ENCODE measurements at regions of chr16 and their contacts with region 1.

Region 1: GRCh38 chr16:70508752-70509151 is 14.6 kb downstream of the COG4 start:
- DNase-seq: no peak
- H3K4me3 Mint-ChIP-seq: no peak overlapping the region
- H3K27ac Mint-ChIP-seq: peak overlapping the region; percentile 66
- H3K4me1 Mint-ChIP-seq: peaks cover 9% of the 10 kb centered on the region
- H3K27me3 Mint-ChIP-seq: no peaks in the 10 kb centered on the region

Region 2: GRCh38 chr16:70388006-70388680 is 120.6 kb before region 1 on chr16:
- CTCF ChIA-PET with region 1: no interaction called
- POLR2A ChIA-PET with region 1: no interaction called
- DNase-seq: no peak
- H3K4me3 Mint-ChIP-seq: no peak overlapping the region
- H3K27ac Mint-ChIP-seq: no peak overlapping the region
- H3K4me1 Mint-ChIP-seq: peaks cover 6% of the 10 kb centered on the region
- H3K27me3 Mint-ChIP-seq: no peaks in the 10 kb centered on the region

Region 3: DNA sequence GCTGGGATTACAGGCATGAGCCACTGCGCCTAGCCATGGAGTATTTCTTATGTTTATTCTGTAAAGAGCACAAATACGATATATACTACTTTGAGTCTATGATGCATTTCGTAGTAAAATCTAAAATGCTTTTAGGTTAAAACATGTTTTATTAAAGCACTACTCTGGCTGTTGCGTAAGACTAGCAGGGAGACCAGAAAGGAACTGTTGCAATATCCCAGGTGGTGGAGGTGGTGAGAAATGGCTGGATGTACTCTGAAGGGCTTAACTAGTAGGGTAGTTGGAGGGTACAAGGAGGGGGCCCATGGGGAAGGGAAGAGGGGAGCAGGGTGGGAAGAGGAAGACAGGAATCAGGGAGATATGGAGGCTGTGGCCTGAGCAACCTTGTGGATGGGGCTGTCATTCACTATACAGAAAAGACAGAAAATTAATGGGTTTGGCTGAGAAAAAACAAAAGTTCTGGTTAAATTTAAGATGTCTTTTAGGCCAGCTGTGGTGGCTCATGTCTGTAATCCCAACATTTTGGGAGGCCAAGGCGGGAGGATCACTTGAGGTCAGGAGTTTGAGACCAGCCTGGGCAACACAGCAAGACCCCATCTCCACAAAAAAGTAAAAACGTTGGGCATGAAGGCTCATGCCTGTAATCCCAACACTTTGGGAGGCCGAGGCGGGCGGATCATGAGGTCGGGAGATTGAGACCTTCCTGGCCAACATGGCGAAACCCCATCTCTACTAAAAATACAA is 105.7 kb before region 1 on chr16:
- CTCF ChIA-PET with region 1: no interaction called
- POLR2A ChIA-PET with region 1: no interaction called
- DNase-seq: no peak
- H3K4me3 Mint-ChIP-seq: no peak overlapping the region
- H3K27ac Mint-ChIP-seq: no peak overlapping the region
- H3K4me1 Mint-ChIP-seq: peaks cover 36% of the 10 kb centered on the region
- H3K27me3 Mint-ChIP-seq: peaks cover 1% of the 10 kb centered on the region

Region 4: GRCh38 chr16:70438969-70439862 is 69.5 kb before region 1 on chr16 and contains the start of gene ST3GAL2:
- CTCF ChIA-PET with region 1: no interaction called
- POLR2A ChIA-PET with region 1: no interaction called
- DNase-seq: peak; percentile 96
- H3K4me3 Mint-ChIP-seq: peak within 1 kb of the TSS; percentile 88
- H3K27ac Mint-ChIP-seq: peak within 1 kb of the TSS; percentile 74
- H3K4me1 Mint-ChIP-seq: peaks cover 29% of the 10 kb centered on the region
- H3K27me3 Mint-ChIP-seq: no peaks in the 10 kb centered on the region
- total RNA-seq, gene ST3GAL2: 21.6 to 22.7 TPM

Region 5: GRCh38 chr16:70653809-70654771 is 145.3 kb after region 1 on chr16:
- CTCF ChIA-PET with region 1: interaction called, 13 read pairs
- POLR2A ChIA-PET with region 1: no interaction called
- DNase-seq: peak; percentile 86
- H3K4me3 Mint-ChIP-seq: peak overlapping the region; percentile 31
- H3K27ac Mint-ChIP-seq: no peak overlapping the region
- H3K4me1 Mint-ChIP-seq: peaks cover 5% of the 10 kb centered on the region
- H3K27me3 Mint-ChIP-seq: peaks cover 3% of the 10 kb centered on the region